ENCODE measurements at regions of chr20 and their contacts with region 1.

Region 1: GRCh38 chr20:38033310-38034107 is at the starts of genes RPRD1B and TTI1:
- DNase-seq: peak; percentile 95
- ATAC-seq: peak; percentile 92
- H3K4me3 ChIP-seq: peak within 1 kb of the TSS; percentile 75 to 99 (median 85)
- H3K27ac ChIP-seq: peak within 1 kb of the TSS; percentile 95
- H3K4me1 ChIP-seq: peaks cover 84% of the 10 kb centered on the region
- H3K27me3 ChIP-seq: no peaks in the 10 kb centered on the region; a peak in 1 of 5 replicates
- CTCF ChIP-seq: peak; percentile 43
- EP300 ChIP-seq: peak; percentile 9 to 71; a peak in 2 of 4 replicates
- POLR2A ChIP-seq: peak; percentile 95 to 96
- RAD21 ChIP-seq: peak; percentile 57; the same call in 1 of the 2 replicates
- total RNA-seq, gene RPRD1B: 41.5 and 45.6 TPM in 2 replicates
- total RNA-seq, gene TTI1: 39.8 and 51.7 TPM in 2 replicates

Region 2: GRCh38 chr20:38001173-38001872 is 32.2 kb before region 1 on chr20:
- CTCF ChIA-PET with region 1: no interaction called
- POLR2A ChIA-PET with region 1: no interaction called
- in situ Hi-C with region 1: no loop called
- intact Hi-C with region 1: no loop called
- DNase-seq: no peak
- ATAC-seq: no peak
- H3K4me3 ChIP-seq: no peak overlapping the region
- H3K27ac ChIP-seq: no peak overlapping the region
- H3K4me1 ChIP-seq: no peaks in the 10 kb centered on the region
- H3K27me3 ChIP-seq: no peaks in the 10 kb centered on the region
- CTCF ChIP-seq: no peak
- EP300 ChIP-seq: no peak
- POLR2A ChIP-seq: no peak
- RAD21 ChIP-seq: no peak

Region 3: GRCh38 chr20:38023181-38024001 is 10.1 kb before region 1 on chr20:
- CTCF ChIA-PET with region 1: no interaction called
- POLR2A ChIA-PET with region 1: interaction called, 23 read pairs
- in situ Hi-C with region 1: no loop called
- intact Hi-C with region 1: no loop called
- DNase-seq: peak; percentile 43
- ATAC-seq: peak; percentile 82
- H3K4me3 ChIP-seq: no peak overlapping the region
- H3K27ac ChIP-seq: peak overlapping the region; percentile 15
- H3K4me1 ChIP-seq: peaks cover 48% of the 10 kb centered on the region
- H3K27me3 ChIP-seq: no peaks in the 10 kb centered on the region
- CTCF ChIP-seq: no peak
- EP300 ChIP-seq: no peak
- POLR2A ChIP-seq: no peak
- RAD21 ChIP-seq: no peak

Measured in HepG2 (cell line).